AG04449 (cell line): ENCODE measurements at regions of chr11 and their contacts with region 1.

Region 1: DNA sequence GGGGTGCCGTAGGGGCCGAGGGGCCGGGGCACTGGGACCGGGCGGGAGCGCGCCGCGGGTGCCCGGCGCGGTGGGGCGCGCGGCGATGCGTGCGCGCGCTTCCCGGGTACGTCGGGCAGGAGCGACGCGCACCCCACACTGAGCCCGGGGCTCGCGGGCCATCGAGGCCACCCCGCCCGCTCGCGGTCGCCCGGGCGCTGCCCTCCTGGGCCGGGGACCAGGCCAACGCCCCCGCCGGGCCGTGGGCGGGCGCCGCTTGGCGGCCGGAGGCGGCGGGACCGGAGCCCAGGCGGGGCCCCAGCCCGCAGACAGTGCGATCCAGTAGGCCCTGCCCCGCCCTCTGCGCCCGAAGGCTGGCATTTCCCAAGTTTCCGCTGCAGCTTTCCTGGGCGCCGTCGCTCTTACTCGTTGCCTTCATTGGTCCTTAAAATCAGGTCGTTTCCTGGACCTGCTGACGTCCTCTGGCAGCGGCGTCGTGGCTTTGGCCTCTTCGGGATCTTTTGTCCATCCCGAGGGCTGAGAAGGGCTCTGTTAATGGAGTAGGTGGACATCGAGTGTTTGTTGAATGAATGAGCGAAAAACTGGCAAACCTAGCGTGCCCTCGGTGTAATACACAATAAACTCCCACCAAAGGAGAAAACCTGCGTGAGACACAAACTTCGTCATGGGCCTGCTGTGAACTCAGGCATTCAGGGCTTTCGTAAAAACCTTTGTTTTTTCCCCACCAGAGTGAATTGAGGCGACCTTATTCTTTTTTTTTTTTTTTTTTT is 638 bp downstream of the PARVA start:
- DNase-seq: peak; percentile 17
- H3K4me3 ChIP-seq: peak overlapping the region; percentile 79
- CTCF ChIP-seq: no peak

Region 2: GRCh38 chr11:12361682-12362081 is 16.3 kb before region 1 on chr11:
- CTCF ChIA-PET with region 1: interaction called, 14 read pairs
- POLR2A ChIA-PET with region 1: no interaction called
- DNase-seq: no peak
- H3K4me3 ChIP-seq: no peak overlapping the region
- CTCF ChIP-seq: no peak

Region 3: DNA sequence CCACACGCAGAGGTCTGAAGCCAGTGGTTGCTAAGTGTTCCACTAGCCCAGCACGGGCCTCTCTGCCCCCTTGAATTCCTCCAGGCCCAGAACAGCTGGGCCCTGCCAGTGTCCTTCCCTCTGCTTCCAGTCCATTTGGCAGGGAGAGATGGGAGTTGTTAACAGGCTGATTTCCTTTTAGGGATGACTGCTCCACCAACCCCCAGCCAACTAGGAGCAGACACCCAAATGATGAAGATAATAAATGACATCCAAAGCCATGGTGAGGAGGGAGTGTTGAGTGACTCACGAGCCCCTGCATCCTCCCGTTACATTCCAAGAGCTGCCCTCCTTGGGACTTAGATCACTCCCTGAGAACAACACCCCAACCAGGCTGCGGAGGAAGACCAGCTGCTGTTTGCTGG is 19.9 kb after region 1 on chr11:
- CTCF ChIA-PET with region 1: interaction called, 7 read pairs
- POLR2A ChIA-PET with region 1: interaction called, 11 read pairs
- DNase-seq: peak; percentile 92
- H3K4me3 ChIP-seq: no peak overlapping the region
- CTCF ChIP-seq: no peak

Region 4: DNA sequence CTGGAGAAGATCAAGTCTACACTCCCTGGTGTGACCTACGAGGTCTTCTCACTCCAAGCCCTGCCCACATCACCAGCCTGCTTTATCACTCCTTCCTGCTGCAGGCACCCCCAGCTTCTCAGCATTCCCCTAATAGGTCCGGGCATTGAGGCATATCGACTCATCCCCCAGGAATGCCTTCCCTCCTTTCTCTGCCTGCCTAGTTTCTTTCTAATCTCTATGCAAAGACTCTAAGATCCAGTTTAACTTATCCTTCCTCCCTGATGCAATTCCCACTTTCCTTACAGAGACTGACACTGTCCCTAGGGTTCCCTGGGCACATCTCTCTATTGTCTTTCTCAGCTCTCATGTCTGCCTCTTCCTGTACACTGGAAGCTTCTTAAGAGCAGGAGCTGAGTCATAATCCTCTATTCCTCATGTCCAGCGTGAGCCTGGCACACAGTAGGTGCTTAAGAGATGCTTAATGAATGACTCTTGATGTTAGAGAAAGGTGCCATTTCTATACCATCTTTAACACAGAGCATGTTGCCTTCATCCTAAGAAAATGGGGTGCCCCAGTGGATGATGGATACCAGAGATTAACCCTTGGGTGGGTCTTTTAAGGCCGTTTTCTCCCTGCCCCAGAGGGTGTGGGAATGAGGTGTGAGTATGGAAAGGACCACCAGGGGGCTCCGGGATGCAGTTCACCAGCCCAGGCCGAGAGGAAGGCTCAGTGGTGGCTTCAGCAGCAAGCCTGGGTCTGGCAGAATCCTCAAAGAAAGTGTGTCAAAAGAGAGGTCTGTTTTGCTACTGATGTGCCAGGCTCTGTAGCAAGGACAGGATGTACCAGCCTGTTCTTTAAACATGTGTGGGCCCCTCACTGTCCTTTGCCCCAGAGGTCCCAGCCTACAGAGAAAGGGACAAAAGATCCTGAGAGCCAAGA is 34.1 kb after region 1 on chr11:
- CTCF ChIA-PET with region 1: interaction called, 4 read pairs
- POLR2A ChIA-PET with region 1: interaction called, 10 read pairs
- DNase-seq: peak; percentile 90
- H3K4me3 ChIP-seq: no peak overlapping the region
- CTCF ChIP-seq: peak; percentile 84